CD4-positive, alpha-beta memory T cell (primary cell): ENCODE measurements at regions of chr3 and their contacts with region 1.

Region 1: GRCh38 chr3:107676469-107677309 is 153.9 kb downstream of the BBX start:
- DNase-seq: peak in 4 of 5 donors; percentile 14 to 33 (median 32)
- H3K4me3 ChIP-seq: no peak overlapping the region
- H3K4me3 Mint-ChIP-seq: no peak overlapping the region
- H3K27ac ChIP-seq: no peak overlapping the region
- H3K27ac Mint-ChIP-seq: no peak overlapping the region
- H3K4me1 ChIP-seq: peaks cover 3% of the 10 kb centered on the region
- H3K4me1 Mint-ChIP-seq: peaks cover 16 to 23% (median 21%) of the 10 kb centered on the region in 4 donors
- H3K27me3 ChIP-seq: no peaks in the 10 kb centered on the region
- H3K27me3 Mint-ChIP-seq: no peaks in the 10 kb centered on the region

Region 2: GRCh38 chr3:107660306-107660976 is 16.2 kb before region 1 on chr3:
- CTCF ChIA-PET with region 1: interaction called, 54 read pairs
- POLR2A ChIA-PET with region 1: interaction called, 3 read pairs
- intact Hi-C with region 1: loop called (anchors 2 kb)
- DNase-seq: peak in 4 of 5 donors; percentile 19 to 36 (median 27)
- H3K4me3 ChIP-seq: no peak overlapping the region
- H3K4me3 Mint-ChIP-seq: no peak overlapping the region
- H3K27ac ChIP-seq: no peak overlapping the region
- H3K27ac Mint-ChIP-seq: no peak overlapping the region
- H3K4me1 ChIP-seq: peaks cover 17% of the 10 kb centered on the region
- H3K4me1 Mint-ChIP-seq: peaks cover 18 to 28% (median 22%) of the 10 kb centered on the region in 4 donors
- H3K27me3 ChIP-seq: no peaks in the 10 kb centered on the region
- H3K27me3 Mint-ChIP-seq: no peaks in the 10 kb centered on the region

Region 3: GRCh38 chr3:107740992-107741896 is 64.6 kb after region 1 on chr3:
- CTCF ChIA-PET with region 1: interaction called, 100 read pairs
- POLR2A ChIA-PET with region 1: no interaction called
- intact Hi-C with region 1: loop called (anchors 1 kb)
- DNase-seq: peak in 4 of 5 donors; percentile 13 to 28 (median 23)
- H3K4me3 ChIP-seq: no peak overlapping the region
- H3K4me3 Mint-ChIP-seq: no peak overlapping the region
- H3K27ac ChIP-seq: no peak overlapping the region
- H3K27ac Mint-ChIP-seq: no peak overlapping the region
- H3K4me1 ChIP-seq: no peaks in the 10 kb centered on the region
- H3K4me1 Mint-ChIP-seq: peaks cover 0 to 7% (median under 1%) of the 10 kb centered on the region in 4 donors
- H3K27me3 ChIP-seq: no peaks in the 10 kb centered on the region
- H3K27me3 Mint-ChIP-seq: no peaks in the 10 kb centered on the region

Region 4: DNA sequence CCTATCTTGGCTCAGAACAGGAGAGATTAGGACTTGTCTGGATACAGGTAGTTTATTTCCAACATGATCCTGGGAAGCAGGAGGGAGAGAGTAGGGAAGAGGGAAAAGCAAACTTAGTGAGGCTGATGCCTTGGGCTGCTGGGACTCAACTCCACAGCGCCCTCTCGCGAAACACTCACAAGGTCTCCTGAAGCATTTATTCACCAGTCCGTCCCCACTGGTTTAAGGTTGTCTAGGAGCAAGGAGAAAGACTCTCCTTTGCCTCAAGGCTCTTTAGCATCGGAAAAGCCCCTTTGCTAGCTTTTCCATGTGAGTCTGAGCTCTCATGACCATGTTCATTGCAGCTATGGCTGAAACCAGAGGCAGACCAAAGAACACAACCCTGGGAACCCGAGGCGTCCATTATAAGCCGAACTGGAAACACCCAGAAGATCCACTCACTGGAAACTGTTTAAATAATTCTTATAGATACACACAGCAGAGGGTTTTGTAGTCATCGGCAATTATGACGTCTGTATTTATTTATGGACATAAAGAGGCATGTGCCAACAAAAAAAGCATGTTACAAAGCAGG is 169.7 kb after region 1 on chr3:
- CTCF ChIA-PET with region 1: interaction called, 13 read pairs
- POLR2A ChIA-PET with region 1: no interaction called
- intact Hi-C with region 1: no loop called
- DNase-seq: peak in 2 of 5 donors; percentile 14 to 20
- H3K4me3 ChIP-seq: no peak overlapping the region
- H3K4me3 Mint-ChIP-seq: no peak overlapping the region
- H3K27ac ChIP-seq: no peak overlapping the region
- H3K27ac Mint-ChIP-seq: no peak overlapping the region
- H3K4me1 ChIP-seq: no peaks in the 10 kb centered on the region
- H3K4me1 Mint-ChIP-seq: no peaks in the 10 kb centered on the region
- H3K27me3 ChIP-seq: no peaks in the 10 kb centered on the region
- H3K27me3 Mint-ChIP-seq: peaks cover 1 to 5% of the 10 kb centered on the region in 2 donors

Region 5: GRCh38 chr3:107956991-107957900 is 280.6 kb after region 1 on chr3:
- CTCF ChIA-PET with region 1: no interaction called
- POLR2A ChIA-PET with region 1: no interaction called
- intact Hi-C with region 1: no loop called
- DNase-seq: no peak
- H3K4me3 ChIP-seq: no peak overlapping the region
- H3K4me3 Mint-ChIP-seq: no peak overlapping the region
- H3K27ac ChIP-seq: no peak overlapping the region
- H3K27ac Mint-ChIP-seq: no peak overlapping the region
- H3K4me1 ChIP-seq: peaks cover 24% of the 10 kb centered on the region
- H3K4me1 Mint-ChIP-seq: peaks cover 24 to 47% (median 30%) of the 10 kb centered on the region in 4 donors
- H3K27me3 ChIP-seq: no peaks in the 10 kb centered on the region
- H3K27me3 Mint-ChIP-seq: no peaks in the 10 kb centered on the region

Region 6: GRCh38 chr3:108477511-108478147 is 800.9 kb after region 1 on chr3:
- CTCF ChIA-PET with region 1: interaction called, 9 read pairs
- POLR2A ChIA-PET with region 1: no interaction called
- intact Hi-C with region 1: loop called (anchors 5 kb)
- DNase-seq: peak; percentile 45 to 57 (median 53)
- H3K4me3 ChIP-seq: no peak overlapping the region
- H3K4me3 Mint-ChIP-seq: no peak overlapping the region
- H3K27ac ChIP-seq: no peak overlapping the region
- H3K27ac Mint-ChIP-seq: no peak overlapping the region
- H3K4me1 ChIP-seq: no peaks in the 10 kb centered on the region
- H3K4me1 Mint-ChIP-seq: peaks cover 0 to 3% (median 2%) of the 10 kb centered on the region in 4 donors
- H3K27me3 ChIP-seq: no peaks in the 10 kb centered on the region
- H3K27me3 Mint-ChIP-seq: peaks cover 3 to 4% of the 10 kb centered on the region in 2 donors